ENCODE measurements at regions of chr2 and their contacts with region 1.

Region 1: DNA sequence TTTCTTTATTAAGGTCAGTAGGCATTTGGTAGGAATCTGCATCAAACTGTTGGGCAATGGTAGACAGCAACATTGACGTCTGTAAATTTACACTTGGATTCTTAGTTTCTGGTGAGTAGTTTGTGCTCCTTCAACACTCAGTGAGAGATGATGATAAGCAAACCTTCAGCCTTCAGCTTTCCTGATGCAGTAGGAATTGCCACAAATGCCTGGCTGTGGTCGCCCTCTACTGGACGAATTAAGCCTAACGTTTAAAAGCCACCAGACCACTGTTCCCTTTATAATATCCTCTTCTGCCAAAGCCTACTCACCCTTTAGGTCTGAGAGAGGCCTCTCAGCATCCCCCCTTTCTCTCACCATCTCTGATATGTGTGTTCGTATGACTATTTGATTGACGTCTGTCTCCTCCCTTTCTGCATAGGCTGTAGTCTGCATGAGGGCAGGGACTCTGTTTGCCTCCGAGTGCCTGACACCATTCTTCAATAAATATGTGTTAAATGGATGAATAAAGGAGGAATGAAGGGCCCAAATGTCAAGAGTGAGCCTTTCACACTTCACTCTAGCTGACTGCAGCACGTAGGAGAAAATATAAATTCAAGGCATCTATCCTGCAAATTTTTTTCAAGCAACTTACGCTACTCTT is 47.0 kb upstream of the PLEKHM3 start:
- DNase-seq: peak; percentile 72
- ATAC-seq: peak; percentile 93
- H3K4me3 ChIP-seq: no peak overlapping the region
- H3K27ac ChIP-seq: no peak overlapping the region
- H3K4me1 ChIP-seq: no peaks in the 10 kb centered on the region
- H3K27me3 ChIP-seq: peaks cover 5% of the 10 kb centered on the region
- CTCF ChIP-seq: peak; percentile 85
- POLR2A ChIP-seq: 0 out of 2 replicates have a peak, but pooled peaks have one; percentile 42
- RAD21 ChIP-seq: peak; percentile 98

Region 2: DNA sequence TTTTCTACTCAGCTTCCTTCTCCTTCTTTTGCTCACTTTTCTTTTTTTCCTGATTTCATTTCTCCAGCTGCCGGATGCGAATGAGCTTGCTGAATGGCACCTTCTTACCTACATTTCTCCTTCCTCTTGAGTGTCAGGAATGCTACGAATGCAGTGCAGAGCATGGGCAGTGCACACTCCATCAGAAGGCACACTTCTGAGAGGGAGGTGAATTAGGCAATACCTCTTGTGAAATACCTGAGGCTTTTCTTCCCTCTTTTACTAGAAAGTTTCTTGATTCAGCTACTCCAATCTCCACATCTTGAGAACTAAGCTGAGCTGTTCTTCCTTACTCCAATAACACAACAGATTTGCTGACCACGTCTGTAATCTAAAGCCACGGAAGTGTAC is 98.2 kb before region 1 on chr2:
- CTCF ChIA-PET with region 1: interaction called, 3 read pairs
- POLR2A ChIA-PET with region 1: no interaction called
- dilution Hi-C with region 1: no loop called
- in situ Hi-C with region 1: no loop called
- intact Hi-C with region 1: loop called (anchors 5 kb)
- DNase-seq: no peak
- ATAC-seq: no peak
- H3K4me3 ChIP-seq: no peak overlapping the region
- H3K27ac ChIP-seq: no peak overlapping the region
- H3K4me1 ChIP-seq: no peaks in the 10 kb centered on the region
- H3K27me3 ChIP-seq: no peaks in the 10 kb centered on the region
- CTCF ChIP-seq: no peak
- POLR2A ChIP-seq: no peak
- RAD21 ChIP-seq: no peak

Region 3: DNA sequence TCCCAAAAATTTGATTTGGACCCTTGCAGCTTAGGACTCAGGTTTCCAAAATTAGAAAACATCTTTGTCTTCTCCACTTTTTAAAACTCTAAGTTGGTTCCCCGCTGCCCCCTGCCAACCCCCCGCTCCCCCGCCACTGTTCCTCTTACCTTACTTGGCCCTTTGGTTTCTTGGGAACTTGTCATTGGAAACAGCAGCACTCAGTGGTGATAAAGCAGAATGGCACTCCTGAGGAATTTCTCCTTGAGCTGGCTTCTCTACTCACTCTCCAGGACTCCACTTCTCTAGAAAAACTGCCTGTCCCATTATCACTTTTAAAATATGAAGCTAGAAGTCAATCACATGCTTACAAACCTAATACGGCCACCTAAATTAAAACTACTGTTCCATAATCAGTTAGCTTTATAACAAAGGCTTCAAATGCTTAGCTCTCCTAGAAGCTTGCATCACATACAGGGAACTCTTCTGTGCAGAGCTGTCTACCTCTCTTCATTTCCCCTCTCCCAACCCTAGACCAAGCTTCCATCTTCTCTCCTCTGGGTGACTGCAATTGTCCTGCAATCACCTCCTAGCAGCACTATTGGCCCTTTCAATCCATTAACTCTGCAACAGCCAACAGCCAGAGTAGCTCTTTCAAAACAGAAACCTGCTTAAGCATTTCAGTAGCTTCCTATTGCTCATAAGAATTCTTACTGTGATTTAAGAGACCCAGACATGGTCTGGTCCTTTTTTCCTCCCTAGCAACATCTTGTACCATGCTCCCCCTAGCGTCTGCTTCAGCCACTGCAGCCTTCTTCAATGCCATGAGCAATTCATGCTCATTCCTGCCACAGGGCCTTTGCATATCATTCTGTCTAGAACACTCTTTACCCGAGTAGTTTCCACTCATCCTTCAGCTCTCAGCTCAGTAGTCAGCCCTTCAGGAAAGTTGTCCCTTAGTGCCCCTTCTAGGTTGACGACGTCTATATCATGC is 31.9 kb before region 1 on chr2:
- CTCF ChIA-PET with region 1: no interaction called
- POLR2A ChIA-PET with region 1: no interaction called
- dilution Hi-C with region 1: no loop called
- in situ Hi-C with region 1: no loop called
- intact Hi-C with region 1: loop called (anchors 2 kb)
- DNase-seq: peak; percentile 82
- ATAC-seq: peak; percentile 81
- H3K4me3 ChIP-seq: no peak overlapping the region
- H3K27ac ChIP-seq: no peak overlapping the region
- H3K4me1 ChIP-seq: peaks cover 7% of the 10 kb centered on the region
- H3K27me3 ChIP-seq: no peaks in the 10 kb centered on the region
- CTCF ChIP-seq: peak; percentile 81
- POLR2A ChIP-seq: no peak
- RAD21 ChIP-seq: peak; percentile 70

Measured in IMR-90 (cell line).